ENCODE measurements at regions of chr16 and their contacts with region 1.

Region 1: DNA sequence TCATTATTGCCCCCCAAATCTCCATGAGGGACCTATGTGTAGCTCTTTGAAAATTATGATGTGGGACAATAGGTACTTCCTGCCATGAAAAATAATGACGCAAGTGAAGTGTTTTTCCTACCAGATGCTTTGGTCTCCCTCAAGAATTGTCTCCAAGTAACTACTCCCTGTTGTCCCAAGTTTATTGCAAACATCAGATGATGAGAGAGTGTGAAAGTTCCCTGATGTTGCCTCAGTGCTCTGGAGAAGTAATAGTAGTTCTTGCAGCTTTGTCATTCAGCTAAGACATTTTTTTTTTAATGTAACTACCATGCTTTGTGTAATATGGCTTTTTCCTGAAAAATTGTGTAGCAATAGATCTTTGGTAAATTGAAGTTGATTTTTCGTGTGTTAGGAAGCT is 20.1 kb downstream of the LPCAT2 start:
- DNase-seq: peak; percentile 62
- H3K4me3 ChIP-seq: no peak overlapping the region
- H3K27ac ChIP-seq: peak overlapping the region; percentile 63
- H3K4me1 ChIP-seq: peaks cover 38% of the 10 kb centered on the region
- H3K27me3 ChIP-seq: no peaks in the 10 kb centered on the region
- CTCF ChIP-seq: no peak
- POLR2A ChIP-seq: no peak

Region 2: DNA sequence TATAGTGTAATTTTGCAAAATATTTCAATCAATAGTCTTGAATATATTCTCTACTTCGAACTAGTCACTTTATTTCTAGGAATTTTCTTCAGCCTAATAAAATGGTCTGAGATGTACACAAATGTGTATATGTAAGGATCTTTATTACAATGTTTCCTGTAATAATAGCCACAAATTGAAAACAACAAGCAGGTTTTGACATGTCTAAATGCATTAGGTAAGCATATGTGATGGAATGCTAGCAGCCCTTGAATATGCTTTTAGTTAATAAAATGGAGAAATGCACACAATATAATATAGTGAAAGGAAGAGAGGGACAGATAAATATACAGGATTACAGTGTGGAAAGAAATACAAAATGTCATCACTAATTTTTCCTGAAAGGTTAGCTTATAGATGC is 794.9 kb before region 1 on chr16:
- CTCF ChIA-PET with region 1: no interaction called
- POLR2A ChIA-PET with region 1: no interaction called
- dilution Hi-C with region 1: no loop called
- intact Hi-C with region 1: no loop called
- DNase-seq: no peak
- H3K4me3 ChIP-seq: no peak overlapping the region
- H3K27ac ChIP-seq: no peak overlapping the region
- H3K4me1 ChIP-seq: no peaks in the 10 kb centered on the region
- H3K27me3 ChIP-seq: no peaks in the 10 kb centered on the region
- CTCF ChIP-seq: no peak
- POLR2A ChIP-seq: no peak

Region 3: GRCh38 chr16:55508941-55509931 is 19.8 kb before region 1 on chr16 and contains the start of gene LPCAT2:
- CTCF ChIA-PET with region 1: interaction called, 29 read pairs
- POLR2A ChIA-PET with region 1: interaction called, 3 read pairs
- dilution Hi-C with region 1: no loop called
- intact Hi-C with region 1: loop called (anchors 1 kb)
- DNase-seq: peak; percentile 90
- H3K4me3 ChIP-seq: peak within 1 kb of the TSS; percentile 65 to 99 (median 94)
- H3K27ac ChIP-seq: peak within 1 kb of the TSS; percentile 80
- H3K4me1 ChIP-seq: peaks cover 10% of the 10 kb centered on the region
- H3K27me3 ChIP-seq: no peaks in the 10 kb centered on the region
- CTCF ChIP-seq: peak in 1 of 2 donors; percentile 4
- POLR2A ChIP-seq: peak; percentile 90
- total RNA-seq, gene LPCAT2: 72.9 and 79.1 TPM in 2 replicates

Region 4: GRCh38 chr16:55577887-55578286 is 48.9 kb after region 1 on chr16:
- CTCF ChIA-PET with region 1: no interaction called
- POLR2A ChIA-PET with region 1: no interaction called
- dilution Hi-C with region 1: no loop called
- intact Hi-C with region 1: no loop called
- DNase-seq: no peak
- H3K4me3 ChIP-seq: no peak overlapping the region
- H3K27ac ChIP-seq: no peak overlapping the region
- H3K4me1 ChIP-seq: no peaks in the 10 kb centered on the region
- H3K27me3 ChIP-seq: no peaks in the 10 kb centered on the region
- CTCF ChIP-seq: no peak
- POLR2A ChIP-seq: no peak